B cell (primary cell): ENCODE measurements at regions of chr11 and their contacts with region 1.

Region 1: DNA sequence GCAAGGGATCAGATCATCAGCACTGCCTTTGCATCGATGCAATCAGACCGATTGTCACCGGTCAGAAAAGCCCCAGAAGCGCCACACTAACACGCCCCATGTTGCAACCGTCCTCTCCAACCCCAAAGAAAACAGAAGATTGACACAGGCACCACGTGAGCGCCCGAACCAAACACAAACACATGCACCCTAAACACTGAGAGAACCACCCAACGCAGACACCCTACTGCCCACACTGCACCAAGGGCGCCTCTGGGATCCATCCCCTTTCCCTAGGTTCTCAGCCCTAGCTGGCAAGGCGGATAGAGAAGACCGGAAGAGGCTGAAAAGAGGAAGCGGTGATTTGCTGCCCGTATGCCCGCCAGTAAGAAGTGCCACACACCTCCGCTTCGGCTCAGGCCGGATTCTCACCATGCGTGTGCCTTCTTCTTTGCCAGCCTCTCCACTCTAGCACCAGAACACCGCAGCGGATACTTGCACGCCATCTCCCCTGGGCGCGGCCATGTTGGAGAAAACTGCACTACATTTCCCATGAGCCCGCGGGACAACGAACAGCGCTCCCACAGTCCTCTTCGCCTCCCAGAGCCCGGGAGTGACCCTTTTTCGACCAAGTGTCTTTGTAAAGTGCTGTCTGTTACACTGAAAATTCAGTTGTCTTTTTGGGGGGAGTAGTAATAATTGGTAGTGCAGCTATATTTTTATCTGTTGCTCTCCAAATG is at the start of gene ALKBH8:
- DNase-seq: peak; percentile 84
- ATAC-seq: peak; percentile 90
- H3K4me3 ChIP-seq: peak within 1 kb of the TSS; percentile 57 to 94 (median 80)
- H3K4me3 Mint-ChIP-seq: peak within 1 kb of the TSS; percentile 97
- H3K27ac ChIP-seq: peak within 1 kb of the TSS; percentile 71 to 81
- H3K27ac Mint-ChIP-seq: peak within 1 kb of the TSS; percentile 96
- H3K4me1 ChIP-seq: peaks cover 37% of the 10 kb centered on the region in 2 donors
- H3K4me1 Mint-ChIP-seq: peaks cover 46% of the 10 kb centered on the region
- H3K27me3 ChIP-seq: no peaks in the 10 kb centered on the region
- H3K27me3 Mint-ChIP-seq: no peaks in the 10 kb centered on the region
- CTCF ChIP-seq: no peak
- total RNA-seq, gene ALKBH8: 13.3 and 13.5 TPM in 2 replicates

Region 2: GRCh38 chr11:107457558-107458271 is 107.7 kb before region 1 on chr11 and contains the start of gene CWF19L2:
- CTCF ChIA-PET with region 1: interaction called, 3 read pairs
- POLR2A ChIA-PET with region 1: interaction called, 5 read pairs
- intact Hi-C with region 1: loop called (anchors 1 kb)
- DNase-seq: peak; percentile 94
- ATAC-seq: peak; percentile 96
- H3K4me3 ChIP-seq: peak within 1 kb of the TSS; percentile 65 to 99 (median 94)
- H3K4me3 Mint-ChIP-seq: peak within 1 kb of the TSS; percentile 94
- H3K27ac ChIP-seq: peak within 1 kb of the TSS; percentile 64 to 88
- H3K27ac Mint-ChIP-seq: peak within 1 kb of the TSS; percentile 93
- H3K4me1 ChIP-seq: peaks cover 12 to 14% of the 10 kb centered on the region in 2 donors
- H3K4me1 Mint-ChIP-seq: peaks cover 27% of the 10 kb centered on the region
- H3K27me3 ChIP-seq: no peaks in the 10 kb centered on the region
- H3K27me3 Mint-ChIP-seq: peaks cover 5% of the 10 kb centered on the region
- CTCF ChIP-seq: no peak
- total RNA-seq, gene CWF19L2: 44.3 and 44.6 TPM in 2 replicates

Region 3: GRCh38 chr11:107689317-107690202 is 124.2 kb after region 1 on chr11:
- CTCF ChIA-PET with region 1: interaction called, 71 read pairs
- POLR2A ChIA-PET with region 1: no interaction called
- intact Hi-C with region 1: loop called (anchors 1 kb)
- DNase-seq: peak; percentile 63
- ATAC-seq: peak; percentile 57
- H3K4me3 ChIP-seq: no peak overlapping the region
- H3K4me3 Mint-ChIP-seq: no peak overlapping the region
- H3K27ac ChIP-seq: no peak overlapping the region
- H3K27ac Mint-ChIP-seq: no peak overlapping the region
- H3K4me1 ChIP-seq: no peaks in the 10 kb centered on the region
- H3K4me1 Mint-ChIP-seq: no peaks in the 10 kb centered on the region
- H3K27me3 ChIP-seq: no peaks in the 10 kb centered on the region
- H3K27me3 Mint-ChIP-seq: peaks cover 21% of the 10 kb centered on the region
- CTCF ChIP-seq: peak; percentile 64

Region 4: DNA sequence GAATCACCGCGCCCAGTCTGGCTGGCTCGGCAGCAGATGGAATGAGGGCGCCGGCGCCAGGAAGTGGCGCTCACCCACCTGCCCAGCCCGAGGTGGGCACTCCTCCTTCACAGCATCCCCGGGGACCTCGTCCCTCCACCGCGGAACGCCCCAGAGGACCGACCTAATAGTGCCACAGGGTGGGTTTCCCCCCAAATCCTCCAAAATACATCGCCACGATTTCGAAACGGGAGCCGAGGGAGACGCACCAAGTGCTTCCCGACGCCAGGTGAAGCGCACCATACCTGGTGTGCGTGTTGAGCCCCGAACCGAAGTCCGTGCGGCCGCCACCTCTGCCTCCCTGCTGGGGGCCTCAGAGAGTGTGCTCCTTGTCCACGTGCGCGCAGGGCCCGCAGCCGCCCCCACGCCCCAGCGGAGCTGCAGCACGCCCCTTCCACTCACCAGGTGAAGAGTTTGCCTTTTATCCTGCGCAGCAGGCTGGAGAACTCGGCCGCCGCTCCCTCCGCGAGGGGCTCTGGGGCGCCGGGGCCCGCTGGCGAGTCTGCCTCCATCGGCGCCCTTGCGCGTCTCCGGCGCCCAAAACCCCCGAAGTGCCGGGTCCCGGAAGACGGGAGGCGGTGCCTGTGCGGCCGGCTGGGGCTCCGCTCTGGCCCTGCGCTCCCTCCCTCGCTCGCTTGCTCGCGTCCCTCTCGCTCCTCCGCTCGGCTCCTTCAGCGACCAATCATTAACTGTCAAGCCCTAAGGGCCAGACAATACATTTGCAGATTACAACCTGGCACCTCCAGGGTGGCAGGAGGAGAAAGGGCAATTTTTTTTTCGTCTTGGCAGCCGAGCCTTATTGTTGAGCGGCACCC is 293.1 kb after region 1 on chr11 and contains the start of gene SLC35F2:
- CTCF ChIA-PET with region 1: no interaction called
- POLR2A ChIA-PET with region 1: no interaction called
- intact Hi-C with region 1: loop called (anchors 1 kb)
- DNase-seq: peak; percentile 88
- ATAC-seq: peak; percentile 93
- H3K4me3 ChIP-seq: peak within 1 kb of the TSS; percentile 63 to 83 (median 78)
- H3K4me3 Mint-ChIP-seq: peak within 1 kb of the TSS; percentile 99
- H3K27ac ChIP-seq: peak within 1 kb of the TSS; percentile 61 to 77
- H3K27ac Mint-ChIP-seq: peak within 1 kb of the TSS; percentile 94
- H3K4me1 ChIP-seq: peaks cover 14 to 26% of the 10 kb centered on the region in 2 donors
- H3K4me1 Mint-ChIP-seq: peaks cover 29% of the 10 kb centered on the region
- H3K27me3 ChIP-seq: no peaks in the 10 kb centered on the region
- H3K27me3 Mint-ChIP-seq: no peaks in the 10 kb centered on the region
- CTCF ChIP-seq: peak; percentile 34
- total RNA-seq, gene SLC35F2: 9.4 and 10.9 TPM in 2 replicates

Region 5: DNA sequence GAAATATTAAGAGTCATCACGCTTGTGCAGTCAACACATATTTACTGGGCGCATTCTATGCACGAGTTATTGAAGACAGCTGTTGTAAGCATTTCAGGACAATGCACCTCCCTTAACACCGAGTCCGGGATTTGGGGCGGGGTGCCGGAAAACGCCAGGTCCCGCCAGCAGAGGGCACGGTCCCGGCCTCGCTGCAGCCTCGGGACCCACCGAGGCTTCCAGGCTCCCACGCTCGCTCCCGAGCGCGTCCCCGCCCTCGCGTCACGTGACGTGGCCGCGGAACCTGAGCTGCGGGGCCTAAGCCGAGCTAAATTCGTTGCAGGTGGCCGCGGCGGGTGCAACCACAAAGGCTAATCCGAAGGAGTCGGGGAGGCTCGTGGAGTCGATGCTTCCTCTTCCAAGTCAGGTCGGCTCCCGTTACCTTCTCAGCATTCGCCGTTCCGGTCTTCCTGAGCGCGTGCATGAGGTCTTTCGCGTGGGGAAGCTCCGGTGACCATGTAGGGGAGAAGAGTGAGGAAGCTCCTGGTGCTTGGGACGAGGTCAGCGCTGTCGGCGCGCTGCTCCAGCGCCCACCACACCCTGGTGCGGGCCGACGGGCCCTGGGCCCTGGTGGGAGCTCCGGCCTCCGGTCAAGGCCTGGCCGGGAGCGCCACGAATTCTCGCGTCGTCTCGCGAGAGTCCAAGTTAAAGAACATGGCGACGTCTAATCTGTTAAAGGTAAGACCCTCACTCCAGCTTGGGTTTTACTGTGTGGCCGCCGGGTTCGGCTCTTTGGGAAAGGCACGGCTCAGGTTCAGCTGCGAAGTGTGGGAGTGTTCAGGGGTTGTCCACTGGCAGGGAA is 443.5 kb after region 1 on chr11 and contains the start of gene CUL5:
- CTCF ChIA-PET with region 1: no interaction called
- POLR2A ChIA-PET with region 1: no interaction called
- intact Hi-C with region 1: loop called (anchors 5 kb)
- DNase-seq: peak; percentile 95
- ATAC-seq: peak; percentile 91
- H3K4me3 ChIP-seq: peak within 1 kb of the TSS; percentile 79 to 100 (median 99)
- H3K4me3 Mint-ChIP-seq: peak within 1 kb of the TSS; percentile 99
- H3K27ac ChIP-seq: peak within 1 kb of the TSS; percentile 95 to 97
- H3K27ac Mint-ChIP-seq: peak within 1 kb of the TSS; percentile 98
- H3K4me1 ChIP-seq: peaks cover 18 to 20% of the 10 kb centered on the region in 2 donors
- H3K4me1 Mint-ChIP-seq: peaks cover 26% of the 10 kb centered on the region
- H3K27me3 ChIP-seq: no peaks in the 10 kb centered on the region
- H3K27me3 Mint-ChIP-seq: no peaks in the 10 kb centered on the region
- CTCF ChIP-seq: peak; percentile 80
- total RNA-seq, gene CUL5: 44.1 and 47.0 TPM in 2 replicates

Region 6: GRCh38 chr11:108664730-108665525 is 1099.5 kb after region 1 on chr11 and contains the start of gene DDX10:
- CTCF ChIA-PET with region 1: no interaction called
- POLR2A ChIA-PET with region 1: no interaction called
- intact Hi-C with region 1: loop called (anchors 2 kb)
- DNase-seq: peak; percentile 99
- ATAC-seq: peak; percentile 100
- H3K4me3 ChIP-seq: peak within 1 kb of the TSS; percentile 69 to 94 (median 85)
- H3K4me3 Mint-ChIP-seq: peak within 1 kb of the TSS; percentile 98
- H3K27ac ChIP-seq: peak within 1 kb of the TSS; percentile 52 to 76
- H3K27ac Mint-ChIP-seq: peak within 1 kb of the TSS; percentile 92
- H3K4me1 ChIP-seq: peaks cover 30 to 32% of the 10 kb centered on the region in 2 donors
- H3K4me1 Mint-ChIP-seq: peaks cover 54% of the 10 kb centered on the region
- H3K27me3 ChIP-seq: no peaks in the 10 kb centered on the region
- H3K27me3 Mint-ChIP-seq: peaks cover 5% of the 10 kb centered on the region
- CTCF ChIP-seq: no peak
- total RNA-seq, gene DDX10: 30.6 and 35.8 TPM in 2 replicates